ENCODE measurements at regions of chr18 and their contacts with region 1.

Region 1: GRCh38 chr18:35513181-35513936 is 15.6 kb upstream of the INO80C start:
- DNase-seq: no peak
- ATAC-seq: no peak
- H3K4me3 ChIP-seq: no peak overlapping the region
- H3K27ac ChIP-seq: no peak overlapping the region
- H3K4me1 ChIP-seq: peaks cover 8% of the 10 kb centered on the region
- H3K27me3 ChIP-seq: no peaks in the 10 kb centered on the region
- CTCF ChIP-seq: no peak
- EP300 ChIP-seq: no peak
- POLR2A ChIP-seq: no peak
- RAD21 ChIP-seq: no peak

Region 2: DNA sequence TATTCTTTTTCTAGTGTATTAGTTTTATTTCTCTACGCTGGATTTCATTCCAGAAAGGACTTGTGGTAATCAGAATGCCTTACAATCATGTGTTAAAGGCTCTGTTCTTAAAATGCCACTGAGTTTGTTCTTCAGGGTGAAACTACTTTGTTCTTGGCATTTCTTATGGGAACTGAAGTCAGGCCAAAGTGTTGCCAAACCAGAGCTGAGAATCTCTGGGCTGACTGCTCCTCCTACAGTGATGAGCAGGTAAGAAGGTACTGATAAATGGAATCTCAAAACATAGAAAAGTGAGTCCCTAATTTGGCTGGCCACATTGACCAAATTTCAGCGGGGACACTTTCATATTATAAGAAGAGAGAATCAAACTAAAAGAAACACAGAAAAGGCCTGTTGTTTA is 327.6 kb before region 1 on chr18:
- CTCF ChIA-PET with region 1: no interaction called
- POLR2A ChIA-PET with region 1: no interaction called
- RAD21 ChIA-PET with region 1: no interaction called
- SMC1A ChIA-PET with region 1: no interaction called
- in situ Hi-C with region 1: no loop called
- intact Hi-C with region 1: no loop called
- DNase-seq: no peak
- ATAC-seq: no peak
- H3K4me3 ChIP-seq: no peak overlapping the region
- H3K27ac ChIP-seq: no peak overlapping the region
- H3K4me1 ChIP-seq: no peaks in the 10 kb centered on the region
- H3K27me3 ChIP-seq: no peaks in the 10 kb centered on the region
- CTCF ChIP-seq: 0 out of 6 replicates have a peak, but pooled peaks of 1 of the 3 experiments have one; percentile 10
- EP300 ChIP-seq: no peak
- POLR2A ChIP-seq: no peak
- RAD21 ChIP-seq: peak; percentile 33; the same call in 1 of the 2 replicates

Region 3: DNA sequence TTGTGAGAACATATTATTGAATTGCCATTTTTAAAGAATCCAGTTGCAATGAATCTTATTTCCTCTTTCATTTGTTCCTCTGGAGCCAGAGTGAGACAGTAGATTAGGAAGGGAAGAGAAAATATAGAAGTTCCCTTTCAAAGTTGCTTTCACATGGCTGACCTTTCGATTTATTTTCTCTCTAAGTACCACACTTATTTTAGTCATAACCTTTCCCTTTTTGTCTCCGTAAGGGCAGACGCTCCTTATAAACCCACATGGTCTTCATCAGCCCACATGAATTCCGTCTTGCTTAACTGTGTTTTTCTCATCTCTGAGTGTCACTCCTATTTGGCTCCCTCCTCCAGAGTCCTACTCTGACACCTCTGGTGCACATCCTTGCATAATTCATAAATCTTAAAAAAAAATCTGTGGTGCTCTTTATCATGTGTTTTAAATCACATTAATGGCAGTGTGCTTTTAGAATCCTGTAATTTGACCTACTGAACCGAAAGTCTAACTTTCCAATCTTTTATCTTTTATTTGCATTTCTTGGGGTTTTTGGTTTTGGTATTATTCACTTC is 97.8 kb before region 1 on chr18:
- CTCF ChIA-PET with region 1: interaction called, 4 read pairs
- POLR2A ChIA-PET with region 1: no interaction called
- RAD21 ChIA-PET with region 1: interaction called, 24 read pairs
- SMC1A ChIA-PET with region 1: interaction called, 28 read pairs
- in situ Hi-C with region 1: no loop called
- intact Hi-C with region 1: no loop called
- DNase-seq: no peak
- ATAC-seq: peak; percentile 71
- H3K4me3 ChIP-seq: peak overlapping the region; percentile 8; the same call in 1 of the 2 replicates
- H3K27ac ChIP-seq: peak overlapping the region; percentile 51
- H3K4me1 ChIP-seq: peaks cover 27% of the 10 kb centered on the region
- H3K27me3 ChIP-seq: no peaks in the 10 kb centered on the region
- CTCF ChIP-seq: no peak
- EP300 ChIP-seq: no peak
- POLR2A ChIP-seq: no peak
- RAD21 ChIP-seq: no peak

Region 4: DNA sequence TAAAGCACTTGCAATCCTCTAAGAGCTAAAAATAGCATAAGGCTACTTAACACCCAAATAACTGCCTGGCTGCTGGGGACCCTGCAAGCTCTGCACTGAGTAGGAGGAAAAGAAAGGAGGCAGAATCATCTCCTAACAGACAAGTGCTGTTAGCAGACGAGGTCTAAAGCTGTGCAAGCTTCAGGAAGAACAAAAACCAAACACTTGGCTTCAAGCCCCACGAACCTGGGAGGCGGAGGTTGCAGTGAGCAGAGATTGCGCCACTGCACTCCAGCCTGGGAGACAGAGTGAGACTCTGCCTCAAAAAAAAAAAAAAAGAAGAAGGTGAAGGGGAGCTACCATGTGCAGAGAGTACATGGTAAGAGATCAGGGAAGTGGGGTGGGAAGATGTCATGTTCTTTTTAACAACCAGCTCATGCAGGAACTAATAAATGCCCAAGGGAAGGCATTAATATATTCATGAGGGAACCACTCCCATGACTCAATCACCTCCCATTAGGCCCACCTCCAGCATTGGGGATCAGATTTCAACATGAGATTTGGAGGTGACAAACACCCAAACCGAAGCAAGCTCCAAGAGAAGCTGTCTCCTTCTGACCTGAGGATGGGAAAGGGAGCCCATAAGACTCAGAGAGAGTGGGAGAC is 13.2 kb after region 1 on chr18:
- CTCF ChIA-PET with region 1: interaction called, 11 read pairs
- POLR2A ChIA-PET with region 1: interaction called, 4 read pairs
- RAD21 ChIA-PET with region 1: interaction called, 4 read pairs
- SMC1A ChIA-PET with region 1: interaction called, 13 read pairs
- in situ Hi-C with region 1: no loop called
- intact Hi-C with region 1: no loop called
- DNase-seq: no peak
- ATAC-seq: no peak
- H3K4me3 ChIP-seq: no peak overlapping the region
- H3K27ac ChIP-seq: no peak overlapping the region
- H3K4me1 ChIP-seq: no peaks in the 10 kb centered on the region
- H3K27me3 ChIP-seq: peaks cover 0 to 3% of the 10 kb centered on the region in 2 experiments; a peak in 2 of 4 replicates
- CTCF ChIP-seq: no peak
- EP300 ChIP-seq: no peak
- POLR2A ChIP-seq: no peak
- RAD21 ChIP-seq: no peak

Region 5: DNA sequence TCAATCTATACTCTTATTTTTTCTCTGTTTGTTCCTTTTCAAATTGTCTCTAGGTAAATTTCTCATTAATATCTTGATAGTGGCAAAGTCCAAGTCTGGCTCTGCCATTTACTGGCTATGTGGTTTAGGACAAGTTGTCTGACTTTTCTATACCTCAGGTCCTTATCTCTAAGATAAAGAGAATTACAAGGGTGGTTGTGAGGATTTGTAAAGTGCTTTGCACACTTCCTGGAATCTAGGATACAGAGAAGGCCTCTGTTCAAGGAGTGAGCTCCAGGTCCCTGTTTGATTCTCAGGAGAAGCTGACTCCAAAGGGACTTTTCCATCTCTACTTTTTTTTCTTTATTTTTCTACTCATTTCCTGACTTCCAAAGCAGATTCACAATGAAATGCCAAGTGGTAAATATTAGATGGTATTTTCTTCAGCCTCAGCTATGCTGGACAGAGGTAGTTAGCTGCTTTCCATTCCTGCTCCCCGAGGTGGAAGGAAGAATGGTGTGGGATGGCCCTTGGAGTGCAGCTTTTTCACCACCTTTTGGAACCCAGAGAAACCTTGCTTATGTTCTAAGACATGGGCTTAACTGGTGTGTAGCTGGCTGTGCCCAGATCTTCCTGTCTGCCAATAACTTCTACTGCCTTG is 158.7 kb after region 1 on chr18:
- CTCF ChIA-PET with region 1: no interaction called
- POLR2A ChIA-PET with region 1: no interaction called
- RAD21 ChIA-PET with region 1: no interaction called
- SMC1A ChIA-PET with region 1: no interaction called
- in situ Hi-C with region 1: no loop called
- intact Hi-C with region 1: no loop called
- DNase-seq: no peak
- ATAC-seq: no peak
- H3K4me3 ChIP-seq: no peak overlapping the region
- H3K27ac ChIP-seq: no peak overlapping the region
- H3K4me1 ChIP-seq: no peaks in the 10 kb centered on the region
- H3K27me3 ChIP-seq: no peaks in the 10 kb centered on the region
- CTCF ChIP-seq: no peak
- EP300 ChIP-seq: no peak
- POLR2A ChIP-seq: no peak
- RAD21 ChIP-seq: no peak

Measured in GM12878 (cell line).